Activated CD4-positive, alpha-beta memory T cell treated with anti-CD3 and anti-CD28 coated beads for 36 hours (primary cell): ENCODE measurements at regions of chr13 and their contacts with region 1.

Region 1: GRCh38 chr13:97344265-97345175 is 89.4 kb upstream of the RAP2A start:
- DNase-seq: peak; percentile 70
- H3K4me3 Mint-ChIP-seq: no peak overlapping the region
- H3K27ac Mint-ChIP-seq: no peak overlapping the region
- H3K4me1 Mint-ChIP-seq: peaks cover 12% of the 10 kb centered on the region
- H3K27me3 Mint-ChIP-seq: no peaks in the 10 kb centered on the region

Region 2: GRCh38 chr13:97212601-97213040 is 131.9 kb before region 1 on chr13:
- CTCF ChIA-PET with region 1: interaction called, 5 read pairs
- POLR2A ChIA-PET with region 1: no interaction called
- intact Hi-C with region 1: loop called (anchors 2 kb)
- DNase-seq: no peak
- H3K4me3 Mint-ChIP-seq: no peak overlapping the region
- H3K27ac Mint-ChIP-seq: no peak overlapping the region
- H3K4me1 Mint-ChIP-seq: peaks cover 29% of the 10 kb centered on the region
- H3K27me3 Mint-ChIP-seq: no peaks in the 10 kb centered on the region

Region 3: GRCh38 chr13:97221989-97222700 is 122.4 kb before region 1 on chr13 and contains the start of gene MBNL2:
- CTCF ChIA-PET with region 1: interaction called, 15 read pairs
- POLR2A ChIA-PET with region 1: interaction called, 3 read pairs
- intact Hi-C with region 1: loop called (anchors 2 kb)
- DNase-seq: peak; percentile 93
- H3K4me3 Mint-ChIP-seq: peak within 1 kb of the TSS; percentile 81
- H3K27ac Mint-ChIP-seq: peak within 1 kb of the TSS; percentile 91
- H3K4me1 Mint-ChIP-seq: peaks cover 31% of the 10 kb centered on the region
- H3K27me3 Mint-ChIP-seq: no peaks in the 10 kb centered on the region
- total RNA-seq, gene MBNL2: 23.4 to 24.6 TPM

Region 4: GRCh38 chr13:97289514-97290298 is 54.8 kb before region 1 on chr13:
- CTCF ChIA-PET with region 1: no interaction called
- POLR2A ChIA-PET with region 1: no interaction called
- intact Hi-C with region 1: loop called (anchors 5 kb)
- DNase-seq: no peak
- H3K4me3 Mint-ChIP-seq: no peak overlapping the region
- H3K27ac Mint-ChIP-seq: peak overlapping the region; percentile 72
- H3K4me1 Mint-ChIP-seq: peaks cover 54% of the 10 kb centered on the region
- H3K27me3 Mint-ChIP-seq: no peaks in the 10 kb centered on the region

Region 5: DNA sequence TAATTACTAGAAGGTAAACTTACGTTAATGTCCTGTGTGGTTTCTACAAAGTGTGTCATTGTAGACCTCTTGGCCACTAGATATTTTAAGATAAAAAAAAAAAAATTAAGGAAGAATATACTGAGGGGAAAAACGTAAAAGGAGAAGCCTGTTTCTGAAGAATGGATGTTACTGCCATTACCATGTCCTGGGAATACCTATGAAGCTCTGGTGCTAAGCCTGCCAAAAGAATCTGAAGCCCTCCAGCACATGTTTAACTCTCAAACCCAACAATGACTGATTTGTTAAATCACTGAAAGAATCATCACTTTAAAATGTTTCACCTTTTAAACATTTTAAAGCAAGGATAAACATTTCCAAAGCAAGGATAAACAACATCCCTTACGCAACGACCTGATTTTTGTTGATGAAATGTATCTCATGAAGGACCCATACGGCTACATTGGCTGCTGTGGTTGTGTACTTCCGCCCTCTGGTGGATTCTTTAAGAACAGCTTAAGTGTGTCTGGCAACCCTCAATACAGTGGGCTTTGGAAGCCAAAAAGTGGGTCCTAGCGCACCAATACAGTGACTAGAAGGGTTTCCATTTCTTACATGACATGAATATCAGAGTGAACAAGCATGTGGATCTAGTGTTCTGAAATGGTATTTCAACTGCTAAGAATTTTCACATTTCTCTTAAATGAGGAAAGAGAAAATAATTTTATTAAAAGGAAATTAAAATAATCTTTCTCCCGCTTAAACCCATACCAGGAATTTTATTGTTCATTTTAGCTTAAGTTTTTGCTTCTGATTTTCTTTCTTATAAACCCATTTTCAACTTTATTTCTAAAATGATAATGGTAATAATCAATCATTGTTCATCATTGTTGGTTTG is 14.9 kb after region 1 on chr13:
- CTCF ChIA-PET with region 1: interaction called, 21 read pairs
- POLR2A ChIA-PET with region 1: no interaction called
- intact Hi-C with region 1: no loop called
- DNase-seq: peak; percentile 52
- H3K4me3 Mint-ChIP-seq: no peak overlapping the region
- H3K27ac Mint-ChIP-seq: no peak overlapping the region
- H3K4me1 Mint-ChIP-seq: no peaks in the 10 kb centered on the region
- H3K27me3 Mint-ChIP-seq: no peaks in the 10 kb centered on the region

Region 6: DNA sequence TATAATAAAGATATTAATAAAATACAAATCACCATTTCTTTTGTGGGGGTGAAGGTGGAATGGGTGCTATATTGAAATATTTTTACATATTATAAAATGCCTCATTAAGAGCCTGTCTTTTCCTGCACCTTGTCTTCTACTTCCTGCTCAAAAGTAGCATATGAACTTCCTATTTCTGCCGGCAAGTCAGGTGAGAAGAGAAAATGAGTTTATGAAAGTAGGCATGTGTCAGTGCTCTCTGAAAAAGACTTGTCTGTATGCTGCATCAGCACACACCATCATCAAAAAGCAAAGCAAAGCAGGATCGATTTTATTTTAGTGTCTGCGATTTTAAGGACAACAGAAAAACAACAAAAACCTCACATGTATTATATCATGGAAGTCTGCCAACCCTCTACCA is 203.6 kb after region 1 on chr13:
- CTCF ChIA-PET with region 1: no interaction called
- POLR2A ChIA-PET with region 1: no interaction called
- intact Hi-C with region 1: no loop called
- DNase-seq: no peak
- H3K4me3 Mint-ChIP-seq: no peak overlapping the region
- H3K27ac Mint-ChIP-seq: no peak overlapping the region
- H3K4me1 Mint-ChIP-seq: peaks cover 2% of the 10 kb centered on the region
- H3K27me3 Mint-ChIP-seq: peaks cover 10% of the 10 kb centered on the region

Region 7: DNA sequence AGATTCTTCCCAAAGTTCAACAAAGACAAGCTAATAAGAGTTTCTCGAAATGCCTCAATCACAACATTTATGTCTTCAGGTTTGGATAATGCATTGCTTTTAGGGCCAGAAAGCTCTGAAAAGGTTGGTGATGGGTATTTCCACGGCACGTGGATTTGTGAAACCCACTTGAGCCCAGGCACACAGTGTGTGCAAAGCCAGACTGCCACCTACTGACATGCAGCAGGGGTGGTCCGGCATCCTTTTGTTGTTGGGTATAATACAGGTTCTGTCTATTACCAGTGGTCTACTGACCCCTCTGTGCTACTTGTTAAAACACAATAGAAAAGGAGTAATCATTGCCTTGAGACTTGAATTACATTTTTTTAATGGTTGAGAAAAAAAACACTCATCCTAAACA is 315.1 kb after region 1 on chr13:
- CTCF ChIA-PET with region 1: no interaction called
- POLR2A ChIA-PET with region 1: no interaction called
- intact Hi-C with region 1: no loop called
- DNase-seq: no peak
- H3K4me3 Mint-ChIP-seq: no peak overlapping the region
- H3K27ac Mint-ChIP-seq: no peak overlapping the region
- H3K4me1 Mint-ChIP-seq: no peaks in the 10 kb centered on the region
- H3K27me3 Mint-ChIP-seq: peaks cover 2% of the 10 kb centered on the region

Region 8: GRCh38 chr13:97975848-97976609 is 631.5 kb after region 1 on chr13:
- CTCF ChIA-PET with region 1: no interaction called
- POLR2A ChIA-PET with region 1: no interaction called
- intact Hi-C with region 1: no loop called
- DNase-seq: peak; percentile 91
- H3K4me3 Mint-ChIP-seq: peak overlapping the region; percentile 86
- H3K27ac Mint-ChIP-seq: peak overlapping the region; percentile 95
- H3K4me1 Mint-ChIP-seq: peaks cover 31% of the 10 kb centered on the region
- H3K27me3 Mint-ChIP-seq: no peaks in the 10 kb centered on the region